CD4-positive, alpha-beta memory T cell (primary cell): ENCODE measurements at regions of chr1 and their contacts with region 1.

Region 1: DNA sequence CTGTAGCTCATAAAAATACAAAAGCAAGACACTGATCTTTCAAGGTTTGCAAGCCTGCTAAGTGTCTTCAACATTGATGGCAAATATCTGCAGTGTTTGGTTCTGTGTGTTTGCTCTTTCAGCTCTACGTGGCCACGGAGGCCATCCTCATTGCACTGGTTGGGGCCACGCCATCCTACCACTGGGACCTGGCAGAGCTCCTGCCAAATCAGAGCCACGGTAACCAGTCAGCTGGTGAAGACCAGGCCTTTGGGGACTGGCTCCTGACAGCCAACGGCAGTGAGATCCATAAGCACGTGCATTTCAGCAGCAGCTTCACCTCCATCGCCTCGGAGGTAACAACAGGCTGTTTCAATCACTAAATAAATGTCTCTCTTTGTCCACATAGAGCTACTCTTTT is 15.6 kb downstream of the SLC22A15 start:
- DNase-seq: no peak
- H3K4me3 ChIP-seq: no peak overlapping the region
- H3K4me3 Mint-ChIP-seq: no peak overlapping the region
- H3K27ac ChIP-seq: no peak overlapping the region
- H3K27ac Mint-ChIP-seq: no peak overlapping the region
- H3K4me1 ChIP-seq: no peaks in the 10 kb centered on the region
- H3K4me1 Mint-ChIP-seq: peaks cover 0 to 5% (median 0%) of the 10 kb centered on the region in 4 donors
- H3K27me3 ChIP-seq: no peaks in the 10 kb centered on the region
- H3K27me3 Mint-ChIP-seq: peaks cover 0 to 2% of the 10 kb centered on the region in 2 donors

Region 2: GRCh38 chr1:115980998-115981993 is 10.6 kb before region 1 on chr1:
- CTCF ChIA-PET with region 1: interaction called, 12 read pairs
- POLR2A ChIA-PET with region 1: no interaction called
- intact Hi-C with region 1: no loop called
- DNase-seq: peak in 3 of 5 donors; percentile 20 to 36 (median 24)
- H3K4me3 ChIP-seq: no peak overlapping the region
- H3K4me3 Mint-ChIP-seq: no peak overlapping the region
- H3K27ac ChIP-seq: no peak overlapping the region
- H3K27ac Mint-ChIP-seq: no peak overlapping the region
- H3K4me1 ChIP-seq: peaks cover 4% of the 10 kb centered on the region
- H3K4me1 Mint-ChIP-seq: peaks cover 0 to 9% (median 7%) of the 10 kb centered on the region in 4 donors
- H3K27me3 ChIP-seq: no peaks in the 10 kb centered on the region
- H3K27me3 Mint-ChIP-seq: peaks cover 9% of the 10 kb centered on the region in 2 donors

Region 3: GRCh38 chr1:116133696-116134650 is 142.1 kb after region 1 on chr1:
- CTCF ChIA-PET with region 1: no interaction called
- POLR2A ChIA-PET with region 1: no interaction called
- intact Hi-C with region 1: no loop called
- DNase-seq: no peak
- H3K4me3 ChIP-seq: no peak overlapping the region
- H3K4me3 Mint-ChIP-seq: no peak overlapping the region
- H3K27ac ChIP-seq: no peak overlapping the region
- H3K27ac Mint-ChIP-seq: no peak overlapping the region
- H3K4me1 ChIP-seq: peaks cover 2% of the 10 kb centered on the region
- H3K4me1 Mint-ChIP-seq: peaks cover 5 to 9% (median 8%) of the 10 kb centered on the region in 4 donors
- H3K27me3 ChIP-seq: no peaks in the 10 kb centered on the region
- H3K27me3 Mint-ChIP-seq: peaks cover 0 to 2% of the 10 kb centered on the region in 2 donors

Region 4: GRCh38 chr1:116243333-116244054 is 251.6 kb after region 1 on chr1:
- CTCF ChIA-PET with region 1: no interaction called
- POLR2A ChIA-PET with region 1: no interaction called
- intact Hi-C with region 1: no loop called
- DNase-seq: no peak
- H3K4me3 ChIP-seq: no peak overlapping the region
- H3K4me3 Mint-ChIP-seq: no peak overlapping the region
- H3K27ac ChIP-seq: no peak overlapping the region
- H3K27ac Mint-ChIP-seq: peak overlapping the region in 1 of 7 donors; percentile 38
- H3K4me1 ChIP-seq: no peaks in the 10 kb centered on the region
- H3K4me1 Mint-ChIP-seq: peaks cover 3 to 19% (median 6%) of the 10 kb centered on the region in 4 donors
- H3K27me3 ChIP-seq: no peaks in the 10 kb centered on the region
- H3K27me3 Mint-ChIP-seq: peaks cover 0 to 2% of the 10 kb centered on the region in 2 donors